WTC11 (cell line): ENCODE measurements at regions of chr2 and their contacts with region 1.

Region 1: GRCh38 chr2:130288461-130289403 is 54.0 kb upstream of the IMP4 start:
- DNase-seq: peak; percentile 83
- ATAC-seq: peak; percentile 90
- H3K4me3 Mint-ChIP-seq: peak overlapping the region; percentile 49
- H3K27ac Mint-ChIP-seq: no peak overlapping the region
- H3K4me1 Mint-ChIP-seq: peaks cover 4% of the 10 kb centered on the region; the same call in 1 of the 2 replicates
- H3K27me3 Mint-ChIP-seq: peaks cover 23% of the 10 kb centered on the region
- CTCF ChIP-seq: no peak

Region 2: DNA sequence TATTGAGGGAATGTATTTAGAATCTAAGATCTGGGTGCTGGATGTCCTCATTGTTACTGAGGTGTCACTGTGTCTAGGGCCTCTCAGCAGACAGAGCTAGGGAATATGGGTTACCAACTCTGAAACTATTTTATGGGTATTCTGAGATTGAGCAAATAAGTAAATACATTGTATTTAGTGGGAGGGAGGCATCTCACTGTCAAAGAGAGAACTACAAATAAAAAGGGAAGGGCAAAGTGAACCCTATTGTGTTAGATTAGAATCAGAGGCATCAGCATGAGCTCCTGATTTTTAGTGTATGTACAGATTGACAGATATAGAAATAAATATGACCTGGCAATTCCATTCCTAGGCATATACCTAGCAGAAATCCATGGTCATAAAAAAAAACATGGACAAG is 343.2 kb before region 1 on chr2:
- CTCF ChIA-PET with region 1: no interaction called
- POLR2A ChIA-PET with region 1: no interaction called
- DNase-seq: no peak
- ATAC-seq: no peak
- H3K4me3 Mint-ChIP-seq: no peak overlapping the region
- H3K27ac Mint-ChIP-seq: no peak overlapping the region
- H3K4me1 Mint-ChIP-seq: no peaks in the 10 kb centered on the region
- H3K27me3 Mint-ChIP-seq: no peaks in the 10 kb centered on the region
- CTCF ChIP-seq: no peak

Region 3: GRCh38 chr2:130181325-130181879 is 107.3 kb before region 1 on chr2 and contains the start of gene SMPD4:
- CTCF ChIA-PET with region 1: interaction called, 10 read pairs
- POLR2A ChIA-PET with region 1: no interaction called
- DNase-seq: peak; percentile 97
- ATAC-seq: peak; percentile 71
- H3K4me3 Mint-ChIP-seq: peak within 1 kb of the TSS; percentile 98
- H3K27ac Mint-ChIP-seq: peak within 1 kb of the TSS; percentile 94
- H3K4me1 Mint-ChIP-seq: peaks cover 7% of the 10 kb centered on the region
- H3K27me3 Mint-ChIP-seq: no peaks in the 10 kb centered on the region
- CTCF ChIP-seq: no peak
- total RNA-seq, gene SMPD4: 76.7 to 95.8 TPM (median 81.1 TPM) in 3 replicates

Region 4: DNA sequence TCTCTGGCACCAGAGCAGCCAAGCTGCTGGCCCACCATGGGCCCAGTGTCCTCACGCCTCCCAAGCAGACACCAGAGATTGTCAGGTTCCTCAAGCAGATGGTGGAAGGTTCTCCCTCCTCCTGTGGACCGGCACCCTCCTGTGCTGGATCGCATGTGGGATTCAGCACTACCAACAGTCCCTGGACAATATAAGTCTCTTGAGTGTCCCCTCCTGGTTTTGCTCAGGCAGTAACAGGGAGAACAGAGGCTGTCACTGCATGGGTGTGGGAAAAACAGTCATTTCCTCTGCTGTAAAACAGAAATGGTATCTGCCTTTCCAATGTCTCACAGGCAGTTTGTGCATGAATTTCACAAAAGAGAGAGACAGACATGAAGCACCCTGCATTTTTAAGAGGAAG is 42.8 kb before region 1 on chr2:
- CTCF ChIA-PET with region 1: no interaction called
- POLR2A ChIA-PET with region 1: no interaction called
- DNase-seq: no peak
- ATAC-seq: no peak
- H3K4me3 Mint-ChIP-seq: no peak overlapping the region
- H3K27ac Mint-ChIP-seq: no peak overlapping the region
- H3K4me1 Mint-ChIP-seq: no peaks in the 10 kb centered on the region
- H3K27me3 Mint-ChIP-seq: peaks cover 14% of the 10 kb centered on the region
- CTCF ChIP-seq: no peak

Region 5: GRCh38 chr2:130300258-130300969 is 11.7 kb after region 1 on chr2:
- CTCF ChIA-PET with region 1: interaction called, 12 read pairs
- POLR2A ChIA-PET with region 1: no interaction called
- DNase-seq: peak; percentile 30
- ATAC-seq: peak; percentile 93
- H3K4me3 Mint-ChIP-seq: no peak overlapping the region
- H3K27ac Mint-ChIP-seq: no peak overlapping the region
- H3K4me1 Mint-ChIP-seq: no peaks in the 10 kb centered on the region
- H3K27me3 Mint-ChIP-seq: no peaks in the 10 kb centered on the region
- CTCF ChIP-seq: no peak

Region 6: DNA sequence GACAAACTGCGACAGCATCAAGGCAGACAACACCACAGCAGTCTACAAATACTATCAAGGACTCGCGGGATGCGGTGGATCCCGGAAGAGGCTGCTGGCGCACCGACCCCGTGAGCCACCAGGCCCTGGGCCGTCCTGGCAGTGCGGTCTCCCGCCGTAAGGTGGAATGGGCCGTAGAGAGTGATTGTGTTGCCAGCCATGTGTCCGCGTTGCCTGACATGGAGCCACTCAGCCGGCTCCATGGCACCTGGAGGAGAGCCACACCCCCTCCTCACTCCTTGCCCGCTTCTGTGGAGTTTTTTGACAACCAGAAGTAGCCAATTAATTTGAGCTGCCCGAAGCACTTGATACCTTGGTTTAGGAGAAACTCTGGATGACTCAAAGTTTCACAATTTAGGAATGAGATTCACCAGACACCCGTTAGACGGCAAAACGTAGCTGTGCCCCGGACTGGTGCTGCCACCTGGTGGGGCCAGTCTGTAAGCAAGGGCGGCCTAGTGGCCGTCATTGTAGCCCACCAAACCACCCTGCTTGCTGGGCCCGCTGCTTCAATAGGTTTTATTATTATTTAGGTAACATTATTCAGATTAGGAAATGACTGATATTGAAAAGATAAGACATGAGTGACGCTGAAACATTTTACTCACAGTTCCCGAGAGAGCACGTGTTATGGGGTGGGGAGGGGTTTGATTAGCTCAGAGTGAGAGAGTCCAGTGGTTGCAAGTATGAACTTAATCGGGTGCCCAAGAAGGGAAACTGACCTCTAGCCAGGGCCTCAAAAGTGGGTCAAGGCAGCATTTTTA is 43.7 kb after region 1 on chr2:
- CTCF ChIA-PET with region 1: interaction called, 65 read pairs
- POLR2A ChIA-PET with region 1: interaction called, 4 read pairs
- DNase-seq: peak; percentile 83
- ATAC-seq: peak; percentile 71
- H3K4me3 Mint-ChIP-seq: peak overlapping the region; percentile 71
- H3K27ac Mint-ChIP-seq: no peak overlapping the region
- H3K4me1 Mint-ChIP-seq: peaks cover 20% of the 10 kb centered on the region
- H3K27me3 Mint-ChIP-seq: peaks cover 39% of the 10 kb centered on the region
- CTCF ChIP-seq: peak; percentile 89

Region 7: GRCh38 chr2:130355578-130356431 is 67.1 kb after region 1 on chr2 and contains the start of gene PTPN18:
- CTCF ChIA-PET with region 1: interaction called, 10 read pairs
- POLR2A ChIA-PET with region 1: no interaction called
- DNase-seq: peak; percentile 59
- ATAC-seq: peak; percentile 85
- H3K4me3 Mint-ChIP-seq: peak within 1 kb of the TSS; percentile 78
- H3K27ac Mint-ChIP-seq: no peak within 1 kb of the TSS
- H3K4me1 Mint-ChIP-seq: peaks cover 17% of the 10 kb centered on the region
- H3K27me3 Mint-ChIP-seq: peaks cover 35% of the 10 kb centered on the region
- CTCF ChIP-seq: no peak; the same call in 1 of the 2 replicates
- total RNA-seq, gene PTPN18: 15.7 to 21.8 TPM (median 21.0 TPM) in 3 replicates